ENCODE measurements at regions of chr10 and their contacts with region 1.

Region 1: GRCh38 chr10:6678211-6678803 is 98.2 kb upstream of the PRKCQ start:
- DNase-seq: peak; percentile 69
- H3K4me3 Mint-ChIP-seq: no peak overlapping the region
- H3K27ac Mint-ChIP-seq: no peak overlapping the region
- H3K4me1 Mint-ChIP-seq: peaks cover 10% of the 10 kb centered on the region
- H3K27me3 Mint-ChIP-seq: peaks cover 53% of the 10 kb centered on the region

Region 2: DNA sequence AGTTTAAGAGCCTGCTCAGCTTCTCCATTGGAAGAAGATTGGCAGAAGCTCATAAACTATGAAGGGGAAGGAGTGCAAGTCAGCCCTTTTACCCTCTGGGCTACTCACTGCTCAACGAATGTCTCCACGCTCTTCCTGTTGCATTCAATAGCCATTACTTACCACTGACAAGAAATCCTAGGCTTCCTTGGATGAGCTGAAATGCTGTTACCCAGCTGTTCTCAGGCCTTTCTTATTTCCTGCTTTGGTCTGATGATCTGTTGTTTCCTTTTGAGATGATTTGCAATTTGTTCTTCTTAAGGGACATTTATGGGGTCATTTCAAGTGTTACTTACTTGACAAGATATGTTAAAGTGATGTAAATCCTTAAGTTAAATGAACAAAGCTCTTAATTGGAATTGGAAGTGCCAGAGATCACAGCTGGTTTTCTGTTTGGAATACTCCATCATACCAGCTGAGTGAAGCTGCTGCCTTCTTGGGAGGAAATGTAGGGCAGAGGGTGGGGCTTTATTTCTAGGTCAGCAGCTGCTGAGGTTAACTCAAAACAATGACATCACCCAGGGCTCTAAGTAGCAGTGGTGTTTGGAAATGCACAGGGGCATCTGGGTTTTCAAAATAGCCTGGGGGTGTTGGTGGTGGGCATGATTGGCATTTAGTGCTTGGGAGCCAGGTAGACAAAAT is 268.2 kb before region 1 on chr10:
- CTCF ChIA-PET with region 1: interaction called, 25 read pairs
- POLR2A ChIA-PET with region 1: interaction called, 4 read pairs
- DNase-seq: peak; percentile 67
- H3K4me3 Mint-ChIP-seq: peak overlapping the region; percentile 68
- H3K27ac Mint-ChIP-seq: peak overlapping the region; percentile 88
- H3K4me1 Mint-ChIP-seq: peaks cover 54% of the 10 kb centered on the region
- H3K27me3 Mint-ChIP-seq: peaks cover 2% of the 10 kb centered on the region